Activated T-helper 2 cell treated with anti-CD3 and anti-CD28 coated beads, Interferon-gamma antibody, Interleukin-2, Interleukin-4, amounts not matched to agents 10 μg/mL and 5 μg/mL and 100 μg/mL, durations not matched to agents 14 hours and 24 hours and 36 hours (primary cell): ENCODE measurements at regions of chr11 and their contacts with region 1.

Region 1: GRCh38 chr11:96136613-96137298 is 206.2 kb downstream of the MAML2 start:
- DNase-seq: no peak
- H3K4me3 Mint-ChIP-seq: peak overlapping the region; percentile 10
- H3K27ac Mint-ChIP-seq: peak overlapping the region; percentile 84
- H3K4me1 Mint-ChIP-seq: peaks cover 58% of the 10 kb centered on the region
- H3K27me3 Mint-ChIP-seq: no peaks in the 10 kb centered on the region

Region 2: GRCh38 chr11:96149743-96150555 is 13.2 kb after region 1 on chr11:
- intact Hi-C with region 1: loop called (anchors 2 kb)
- DNase-seq: no peak
- H3K4me3 Mint-ChIP-seq: no peak overlapping the region
- H3K27ac Mint-ChIP-seq: no peak overlapping the region
- H3K4me1 Mint-ChIP-seq: peaks cover 29% of the 10 kb centered on the region
- H3K27me3 Mint-ChIP-seq: no peaks in the 10 kb centered on the region